ENCODE measurements at regions of chr5 and their contacts with region 1.

Region 1: DNA sequence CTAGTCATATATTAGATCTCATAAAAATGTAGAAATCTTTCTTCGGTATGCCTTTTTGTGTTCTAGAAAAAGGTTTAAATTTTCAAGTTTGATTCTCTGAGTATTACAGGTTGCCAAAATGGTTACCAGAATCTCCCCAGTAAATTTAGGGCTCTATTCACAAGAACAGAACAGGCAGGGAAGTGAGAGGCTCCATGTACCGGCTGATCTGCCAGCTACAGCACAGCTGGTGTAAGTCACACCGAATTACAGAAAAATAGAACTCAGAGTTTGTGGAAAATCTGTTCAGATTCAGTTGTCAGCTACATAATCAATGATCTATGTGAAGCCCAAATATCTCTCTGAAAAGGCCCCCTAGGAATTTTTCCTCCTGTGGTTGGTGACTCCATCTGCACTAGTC is 10.5 kb downstream of the FAM81B start:
- DNase-seq: no peak
- ATAC-seq: no peak
- H3K4me3 ChIP-seq: no peak overlapping the region
- H3K27ac ChIP-seq: no peak overlapping the region
- H3K4me1 ChIP-seq: no peaks in the 10 kb centered on the region
- H3K27me3 ChIP-seq: no peaks in the 10 kb centered on the region
- CTCF ChIP-seq: no peak

Region 2: GRCh38 chr5:95379133-95379532 is 22.5 kb before region 1 on chr5:
- intact Hi-C with region 1: loop called in 1 of 3 experiments (anchors 2 kb)
- DNase-seq: no peak
- ATAC-seq: no peak
- H3K4me3 ChIP-seq: no peak overlapping the region
- H3K27ac ChIP-seq: no peak overlapping the region
- H3K4me1 ChIP-seq: no peaks in the 10 kb centered on the region
- H3K27me3 ChIP-seq: peaks cover 0 to 3% (median 0%) of the 10 kb centered on the region in 4 donors
- CTCF ChIP-seq: no peak